Activated CD4-positive, alpha-beta memory T cell treated with anti-CD3 and anti-CD28 coated beads, Interleukin-2, amount 10 ng/mL, durations not matched to agents 7 days and 5 days (primary cell): ENCODE measurements at regions of chr10 and their contacts with region 1.

Region 1: DNA sequence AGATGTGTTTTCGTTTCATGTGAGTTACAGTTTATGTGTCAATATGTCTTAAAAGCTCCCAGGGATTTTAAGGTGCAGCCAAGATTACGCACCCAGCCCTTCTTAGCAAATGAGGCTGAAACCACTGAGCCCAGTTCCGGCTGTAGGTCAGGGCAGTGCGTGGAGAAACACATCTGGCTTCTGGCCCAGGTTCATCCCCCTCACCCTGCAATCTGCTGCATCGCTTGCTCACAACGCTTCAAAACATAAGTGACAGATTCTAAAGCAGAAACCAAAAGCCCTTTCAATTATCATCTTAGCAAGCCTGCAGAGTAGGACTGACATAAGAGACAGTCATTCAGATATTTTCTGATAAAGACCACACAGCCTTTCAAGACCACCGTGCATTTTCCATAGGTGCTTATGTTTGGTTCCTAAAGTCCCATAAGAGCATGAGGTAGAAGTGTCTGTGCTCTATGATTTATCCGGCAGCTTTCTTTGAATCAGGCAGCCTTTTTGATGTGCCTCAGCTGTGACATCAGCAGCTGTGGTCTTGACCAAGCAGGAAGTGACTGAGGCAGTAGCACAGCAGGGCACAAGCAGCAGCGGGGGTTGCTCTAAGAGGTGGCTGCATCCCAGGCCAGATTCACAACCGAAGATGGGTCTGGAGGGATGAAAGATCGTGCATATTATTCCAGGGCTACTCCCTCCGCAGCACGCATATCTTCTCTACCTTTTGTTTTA is 72.1 kb upstream of the LYZL2 start:
- DNase-seq: peak; percentile 85
- H3K4me3 Mint-ChIP-seq: peak overlapping the region; percentile 82
- H3K27ac Mint-ChIP-seq: peak overlapping the region; percentile 99
- H3K4me1 Mint-ChIP-seq: peaks cover 89% of the 10 kb centered on the region
- H3K27me3 Mint-ChIP-seq: no peaks in the 10 kb centered on the region

Region 2: GRCh38 chr10:30398788-30399187 is 302.8 kb before region 1 on chr10:
- CTCF ChIA-PET with region 1: no interaction called
- POLR2A ChIA-PET with region 1: no interaction called
- DNase-seq: no peak
- H3K4me3 Mint-ChIP-seq: no peak overlapping the region
- H3K27ac Mint-ChIP-seq: no peak overlapping the region
- H3K4me1 Mint-ChIP-seq: peaks cover 31% of the 10 kb centered on the region
- H3K27me3 Mint-ChIP-seq: peaks cover 13% of the 10 kb centered on the region

Region 3: DNA sequence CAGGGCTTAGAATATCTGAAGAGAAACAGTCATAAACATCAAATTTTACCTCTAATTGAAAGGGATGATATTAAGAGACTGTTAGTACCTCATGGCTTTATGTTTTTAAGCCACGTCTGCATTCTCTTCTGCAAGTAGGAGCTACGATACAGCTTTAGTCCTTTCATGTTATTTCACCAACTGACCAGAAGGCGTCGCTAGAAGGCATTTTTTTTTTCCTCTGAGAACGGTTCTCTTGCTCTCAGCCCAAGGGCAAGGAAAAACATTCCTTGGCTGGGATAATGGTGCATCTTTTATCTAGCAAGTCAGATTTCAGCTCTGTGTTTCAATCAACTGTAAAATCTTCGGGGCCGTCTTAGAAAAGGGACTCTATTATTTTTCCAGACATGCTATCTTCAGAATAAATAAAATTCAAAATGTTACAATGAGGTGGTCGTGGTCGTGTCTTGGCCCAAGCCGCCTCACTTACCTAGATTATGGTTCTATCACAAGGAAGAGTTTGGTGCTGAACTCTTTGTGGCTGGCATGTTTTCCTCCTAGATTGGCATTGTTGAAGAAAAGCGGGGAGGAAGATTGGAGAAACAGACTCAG is 30.5 kb before region 1 on chr10:
- CTCF ChIA-PET with region 1: interaction called, 11 read pairs
- POLR2A ChIA-PET with region 1: interaction called, 13 read pairs
- DNase-seq: peak; percentile 28
- H3K4me3 Mint-ChIP-seq: peak overlapping the region; percentile 46
- H3K27ac Mint-ChIP-seq: no peak overlapping the region
- H3K4me1 Mint-ChIP-seq: peaks cover 34% of the 10 kb centered on the region
- H3K27me3 Mint-ChIP-seq: peaks cover 7% of the 10 kb centered on the region

Region 4: GRCh38 chr10:30722956-30723620 is 21.5 kb after region 1 on chr10:
- CTCF ChIA-PET with region 1: interaction called, 17 read pairs
- POLR2A ChIA-PET with region 1: interaction called, 4 read pairs
- DNase-seq: no peak
- H3K4me3 Mint-ChIP-seq: no peak overlapping the region
- H3K27ac Mint-ChIP-seq: no peak overlapping the region
- H3K4me1 Mint-ChIP-seq: peaks cover 34% of the 10 kb centered on the region
- H3K27me3 Mint-ChIP-seq: no peaks in the 10 kb centered on the region

Region 5: DNA sequence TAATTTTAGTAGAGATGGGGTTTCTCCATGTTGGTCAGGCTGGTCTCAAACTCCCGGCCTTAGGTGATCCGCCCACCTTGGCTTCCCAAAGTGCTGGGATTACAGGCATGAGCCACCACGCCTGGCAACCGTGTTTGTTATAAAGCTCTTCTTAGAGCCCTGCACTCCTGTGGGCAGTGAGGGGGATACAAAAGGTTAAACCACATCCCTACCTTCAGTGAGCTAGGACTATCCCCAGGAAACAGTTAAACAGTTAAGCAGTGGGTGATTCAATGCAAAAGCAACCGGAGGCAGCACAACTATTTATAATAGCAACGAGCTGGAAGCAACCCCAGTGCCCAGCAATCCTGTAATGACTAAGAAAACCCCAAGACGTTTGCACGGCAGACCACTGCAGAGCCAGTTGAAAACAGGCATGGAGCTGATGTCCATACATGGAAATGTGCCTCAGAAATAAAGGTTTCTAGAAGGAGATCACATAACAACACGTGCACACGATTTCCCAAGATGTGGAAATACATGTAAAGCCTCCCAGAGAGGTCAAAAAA is 35.1 kb after region 1 on chr10:
- CTCF ChIA-PET with region 1: no interaction called
- POLR2A ChIA-PET with region 1: interaction called, 11 read pairs
- DNase-seq: peak; percentile 72
- H3K4me3 Mint-ChIP-seq: no peak overlapping the region
- H3K27ac Mint-ChIP-seq: peak overlapping the region; percentile 82
- H3K4me1 Mint-ChIP-seq: peaks cover 37% of the 10 kb centered on the region
- H3K27me3 Mint-ChIP-seq: no peaks in the 10 kb centered on the region